IMR-90 (cell line): ENCODE measurements at regions of chr9 and their contacts with region 1.

Region 1: GRCh38 chr9:110048403-110048975 is 159.5 kb downstream of the C9orf152 start:
- DNase-seq: peak; percentile 79
- ATAC-seq: peak; percentile 91
- H3K4me3 ChIP-seq: peak overlapping the region; percentile 71
- H3K27ac ChIP-seq: peak overlapping the region; percentile 88
- H3K4me1 ChIP-seq: peaks cover 9% of the 10 kb centered on the region
- H3K27me3 ChIP-seq: no peaks in the 10 kb centered on the region
- CTCF ChIP-seq: no peak
- POLR2A ChIP-seq: peak; percentile 95
- RAD21 ChIP-seq: peak; percentile 9; the same call in 1 of the 2 replicates

Region 2: DNA sequence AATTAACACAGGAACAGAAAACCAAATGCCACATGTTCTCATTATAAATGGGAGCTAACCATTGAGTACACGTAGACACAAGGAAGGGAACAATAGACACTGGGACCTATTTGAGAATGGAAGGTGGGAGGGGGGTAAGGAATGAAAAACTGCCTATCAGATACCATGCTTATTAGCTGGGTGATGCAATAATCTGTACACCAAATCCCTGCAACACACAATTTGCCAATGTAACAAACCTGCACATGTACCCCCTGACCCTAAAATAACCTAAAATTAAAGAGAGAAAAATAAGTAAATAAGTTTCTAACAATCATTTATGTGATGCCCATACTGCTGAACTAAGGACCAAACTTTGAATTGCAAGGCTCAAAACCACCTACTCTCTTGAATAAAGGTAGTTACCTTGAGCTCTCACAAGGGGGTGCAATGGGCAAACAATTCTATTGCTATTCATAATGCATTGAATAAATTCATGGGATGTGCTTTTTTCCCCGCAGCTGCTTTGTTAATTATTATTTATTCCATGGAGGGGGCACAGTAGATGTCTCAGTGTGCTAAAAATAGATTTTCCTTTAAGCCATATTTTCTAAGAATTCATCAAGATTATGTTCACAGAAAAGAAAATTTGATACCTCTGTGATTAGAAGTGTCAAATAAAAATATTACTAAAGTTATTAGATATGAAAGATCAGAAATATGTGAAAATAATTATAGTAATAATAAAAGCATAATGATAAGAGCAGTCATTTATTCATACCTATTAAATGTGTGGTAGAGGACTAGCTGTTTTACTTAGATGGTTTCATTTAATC is 474.2 kb before region 1 on chr9:
- CTCF ChIA-PET with region 1: interaction called, 3 read pairs
- POLR2A ChIA-PET with region 1: no interaction called
- dilution Hi-C with region 1: no loop called
- in situ Hi-C with region 1: no loop called
- intact Hi-C with region 1: loop called (anchors 5 kb)
- DNase-seq: peak; percentile 68
- ATAC-seq: peak; percentile 91
- H3K4me3 ChIP-seq: no peak overlapping the region
- H3K27ac ChIP-seq: no peak overlapping the region
- H3K4me1 ChIP-seq: no peaks in the 10 kb centered on the region
- H3K27me3 ChIP-seq: peaks cover 4% of the 10 kb centered on the region
- CTCF ChIP-seq: peak; percentile 85
- POLR2A ChIP-seq: no peak
- RAD21 ChIP-seq: peak; percentile 92

Region 3: DNA sequence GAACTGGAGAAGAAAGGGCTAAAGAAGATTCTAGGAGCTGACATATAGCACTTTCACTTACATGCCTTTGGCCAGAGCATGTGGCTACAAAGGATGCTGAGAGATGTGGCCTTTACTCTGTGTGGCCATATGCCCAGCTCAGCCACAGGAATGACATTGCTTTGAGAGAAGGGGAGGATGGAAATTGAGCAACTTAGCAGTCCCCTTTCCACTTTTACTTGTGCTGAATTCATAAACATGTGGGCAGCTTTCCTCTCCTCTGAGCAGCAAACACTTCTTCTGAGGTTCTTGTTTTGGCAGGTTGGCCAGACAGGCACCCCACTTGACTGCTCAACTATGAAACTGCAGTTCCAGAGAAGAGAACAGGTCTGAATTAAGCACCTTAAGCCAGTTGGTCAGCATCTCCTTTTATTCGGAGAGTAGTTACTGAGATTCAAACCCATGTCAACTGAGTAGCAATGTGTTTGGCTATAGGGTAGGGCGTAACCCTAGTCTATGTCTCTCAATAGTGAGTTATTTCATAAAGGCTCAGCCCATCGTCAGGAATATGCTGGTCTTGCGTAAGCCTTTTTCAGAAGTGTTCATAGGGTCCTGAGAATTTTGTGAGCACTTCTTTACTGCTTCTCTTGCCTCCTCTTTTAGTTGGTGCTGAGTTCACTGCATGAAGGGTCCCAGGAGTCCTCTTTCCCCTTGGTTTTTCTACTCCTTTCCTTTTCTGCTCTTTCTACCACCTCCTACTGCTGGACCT is 134.0 kb before region 1 on chr9:
- CTCF ChIA-PET with region 1: no interaction called
- POLR2A ChIA-PET with region 1: interaction called, 4 read pairs
- dilution Hi-C with region 1: no loop called
- in situ Hi-C with region 1: loop called (anchors 5 kb)
- intact Hi-C with region 1: no loop called
- DNase-seq: peak; percentile 97
- ATAC-seq: peak; percentile 71
- H3K4me3 ChIP-seq: no peak overlapping the region
- H3K27ac ChIP-seq: peak overlapping the region; percentile 88
- H3K4me1 ChIP-seq: peaks cover 20% of the 10 kb centered on the region
- H3K27me3 ChIP-seq: no peaks in the 10 kb centered on the region
- CTCF ChIP-seq: no peak
- POLR2A ChIP-seq: no peak
- RAD21 ChIP-seq: no peak; the same call in 1 of the 2 replicates

Region 4: GRCh38 chr9:109986521-109986991 is 61.9 kb before region 1 on chr9:
- CTCF ChIA-PET with region 1: no interaction called
- POLR2A ChIA-PET with region 1: no interaction called
- dilution Hi-C with region 1: no loop called
- in situ Hi-C with region 1: no loop called
- intact Hi-C with region 1: loop called (anchors 2 kb)
- DNase-seq: peak; percentile 93
- ATAC-seq: peak; percentile 94
- H3K4me3 ChIP-seq: no peak overlapping the region
- H3K27ac ChIP-seq: peak overlapping the region; percentile 61; the same call in 1 of the 2 replicates
- H3K4me1 ChIP-seq: peaks cover 14% of the 10 kb centered on the region
- H3K27me3 ChIP-seq: no peaks in the 10 kb centered on the region
- CTCF ChIP-seq: no peak
- POLR2A ChIP-seq: no peak
- RAD21 ChIP-seq: no peak

Region 5: GRCh38 chr9:110141227-110141793 is 92.8 kb after region 1 on chr9:
- CTCF ChIA-PET with region 1: no interaction called
- POLR2A ChIA-PET with region 1: no interaction called
- dilution Hi-C with region 1: no loop called
- in situ Hi-C with region 1: loop called (anchors 5 kb)
- intact Hi-C with region 1: loop called (anchors 2 kb)
- DNase-seq: peak; percentile 99
- ATAC-seq: peak; percentile 59
- H3K4me3 ChIP-seq: no peak overlapping the region
- H3K27ac ChIP-seq: peak overlapping the region; percentile 89
- H3K4me1 ChIP-seq: peaks cover 37% of the 10 kb centered on the region
- H3K27me3 ChIP-seq: no peaks in the 10 kb centered on the region
- CTCF ChIP-seq: no peak
- POLR2A ChIP-seq: 0 out of 2 replicates have a peak, but pooled peaks have one; percentile 39
- RAD21 ChIP-seq: peak; percentile 14; the same call in 1 of the 2 replicates